Activated CD4-positive, alpha-beta T cell treated with anti-CD3 and anti-CD28 coated beads, Interleukin-2, amount 10 ng/mL, durations not matched to agents 24 days and 14 days (primary cell): ENCODE measurements at regions of chr1 and their contacts with region 1.

Region 1: GRCh38 chr1:67149179-67149770 is 14.5 kb upstream of the C1orf141 start:
- DNase-seq: peak; percentile 86
- H3K4me3 Mint-ChIP-seq: no peak overlapping the region
- H3K27ac Mint-ChIP-seq: peak overlapping the region; percentile 55
- H3K4me1 Mint-ChIP-seq: peaks cover 32% of the 10 kb centered on the region
- H3K27me3 Mint-ChIP-seq: peaks cover 4% of the 10 kb centered on the region

Region 2: GRCh38 chr1:66929999-66930822 is 219.1 kb before region 1 on chr1:
- intact Hi-C with region 1: loop called (anchors 10 kb)
- DNase-seq: peak; percentile 99
- H3K4me3 Mint-ChIP-seq: peak overlapping the region; percentile 96
- H3K27ac Mint-ChIP-seq: peak overlapping the region; percentile 99
- H3K4me1 Mint-ChIP-seq: peaks cover 50% of the 10 kb centered on the region
- H3K27me3 Mint-ChIP-seq: no peaks in the 10 kb centered on the region

Region 3: DNA sequence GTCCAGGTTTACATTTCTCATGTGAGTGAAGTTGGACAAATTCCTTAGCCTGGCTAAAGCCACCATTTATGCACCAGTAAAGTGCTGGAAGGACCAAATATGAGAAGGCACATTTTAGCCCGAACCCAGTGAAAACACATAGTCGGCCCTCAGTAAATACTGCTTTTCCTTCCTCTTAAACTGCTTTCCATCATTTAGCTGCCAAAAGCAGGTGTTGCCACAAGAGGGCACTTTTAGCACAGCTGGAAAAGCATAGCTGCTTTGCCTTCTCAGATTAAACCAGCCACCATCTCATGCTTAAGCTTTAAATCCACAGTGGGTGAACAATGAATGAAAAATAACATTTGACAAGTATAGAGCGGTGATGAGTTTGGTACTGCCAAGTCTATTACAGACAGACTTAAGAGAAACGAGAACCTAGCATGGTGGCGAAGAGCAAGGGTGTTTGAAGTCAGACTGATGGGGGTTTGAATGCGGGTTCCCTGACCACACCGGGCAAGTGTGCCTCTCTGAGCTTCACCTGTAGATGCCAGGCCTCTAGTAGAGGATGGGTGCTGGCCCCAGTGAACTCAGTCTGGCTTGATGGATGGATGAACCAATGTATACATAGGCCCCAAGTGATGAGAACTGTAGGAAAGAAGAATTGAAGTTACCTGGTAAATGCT is 153.1 kb before region 1 on chr1:
- intact Hi-C with region 1: loop called (anchors 1 kb)
- DNase-seq: peak; percentile 90
- H3K4me3 Mint-ChIP-seq: no peak overlapping the region
- H3K27ac Mint-ChIP-seq: no peak overlapping the region
- H3K4me1 Mint-ChIP-seq: peaks cover 11% of the 10 kb centered on the region
- H3K27me3 Mint-ChIP-seq: no peaks in the 10 kb centered on the region

Region 4: GRCh38 chr1:67053785-67054772 is 95.2 kb before region 1 on chr1 and contains the start of gene SLC35D1:
- intact Hi-C with region 1: loop called (anchors 5 kb)
- DNase-seq: peak; percentile 94
- H3K4me3 Mint-ChIP-seq: peak within 1 kb of the TSS; percentile 86
- H3K27ac Mint-ChIP-seq: peak within 1 kb of the TSS; percentile 95
- H3K4me1 Mint-ChIP-seq: peaks cover 28% of the 10 kb centered on the region
- H3K27me3 Mint-ChIP-seq: peaks cover 10% of the 10 kb centered on the region
- total RNA-seq, gene SLC35D1: 15.9 and 16.1 TPM in 2 replicates

Region 5: DNA sequence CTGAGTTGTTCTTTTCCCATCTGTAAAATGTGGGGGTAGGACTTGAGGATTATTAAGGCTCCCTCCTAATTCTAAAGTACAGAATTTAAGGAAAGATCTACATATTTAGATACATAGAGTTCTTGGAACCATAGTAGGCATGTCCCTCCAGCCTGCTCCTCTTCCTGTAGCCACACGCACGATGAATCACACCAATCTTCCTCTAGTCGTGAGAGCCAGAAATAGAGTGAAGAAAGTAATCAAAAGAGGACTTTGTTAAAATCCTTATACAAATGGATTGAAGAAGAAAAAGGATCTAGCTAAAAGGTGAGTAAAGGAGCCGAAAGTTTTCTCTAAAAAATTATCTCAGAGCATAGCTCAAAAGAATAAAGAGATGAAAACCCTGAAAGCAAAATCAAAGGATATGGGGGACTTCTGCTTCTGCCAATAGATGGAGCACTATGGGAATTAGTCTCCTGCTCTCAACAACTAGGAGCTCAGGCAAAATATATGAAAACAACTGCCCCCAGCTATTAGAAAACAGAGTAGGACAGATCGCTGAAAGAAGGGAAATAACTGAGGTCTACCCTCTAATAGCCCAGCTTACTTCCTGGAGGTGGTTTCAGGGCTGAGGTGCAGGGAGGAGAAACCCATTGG is 23.0 kb before region 1 on chr1:
- intact Hi-C with region 1: no loop called
- DNase-seq: peak; percentile 48
- H3K4me3 Mint-ChIP-seq: no peak overlapping the region
- H3K27ac Mint-ChIP-seq: no peak overlapping the region
- H3K4me1 Mint-ChIP-seq: peaks cover 5% of the 10 kb centered on the region
- H3K27me3 Mint-ChIP-seq: no peaks in the 10 kb centered on the region

Region 6: DNA sequence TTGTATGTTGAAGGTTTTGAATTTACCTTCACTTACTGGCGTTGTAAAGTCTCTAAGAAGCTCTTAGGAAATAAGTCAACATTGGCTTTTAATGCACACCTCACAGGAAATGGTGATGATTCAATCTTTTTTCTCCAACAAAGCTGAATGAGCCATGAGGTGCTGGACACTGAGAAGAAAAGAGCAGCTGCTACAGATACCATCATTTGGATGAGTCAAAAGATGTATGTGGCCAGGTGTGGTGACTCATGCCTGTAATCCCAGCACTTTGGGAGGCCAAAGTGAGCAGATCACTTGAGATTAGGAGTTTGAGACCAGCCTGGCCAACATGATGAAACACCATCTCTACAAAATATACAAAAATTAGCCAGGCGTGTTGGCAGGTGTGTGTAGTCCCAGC is 13.7 kb after region 1 on chr1:
- intact Hi-C with region 1: loop called (anchors 2 kb)
- DNase-seq: peak; percentile 83
- H3K4me3 Mint-ChIP-seq: peak overlapping the region; percentile 39
- H3K27ac Mint-ChIP-seq: peak overlapping the region; percentile 89
- H3K4me1 Mint-ChIP-seq: peaks cover 39% of the 10 kb centered on the region
- H3K27me3 Mint-ChIP-seq: no peaks in the 10 kb centered on the region